MCF 10A (cell line): ENCODE measurements at regions of chr15 and their contacts with region 1.

Region 1: GRCh38 chr15:50145451-50145872 is 26.4 kb upstream of the ATP8B4 start:
- DNase-seq: peak; percentile 75
- H3K4me3 Mint-ChIP-seq: no peak overlapping the region
- H3K27ac Mint-ChIP-seq: no peak overlapping the region
- H3K4me1 Mint-ChIP-seq: peaks cover 12% of the 10 kb centered on the region
- H3K27me3 Mint-ChIP-seq: no peaks in the 10 kb centered on the region
- CTCF ChIP-seq: peak; percentile 49

Region 2: DNA sequence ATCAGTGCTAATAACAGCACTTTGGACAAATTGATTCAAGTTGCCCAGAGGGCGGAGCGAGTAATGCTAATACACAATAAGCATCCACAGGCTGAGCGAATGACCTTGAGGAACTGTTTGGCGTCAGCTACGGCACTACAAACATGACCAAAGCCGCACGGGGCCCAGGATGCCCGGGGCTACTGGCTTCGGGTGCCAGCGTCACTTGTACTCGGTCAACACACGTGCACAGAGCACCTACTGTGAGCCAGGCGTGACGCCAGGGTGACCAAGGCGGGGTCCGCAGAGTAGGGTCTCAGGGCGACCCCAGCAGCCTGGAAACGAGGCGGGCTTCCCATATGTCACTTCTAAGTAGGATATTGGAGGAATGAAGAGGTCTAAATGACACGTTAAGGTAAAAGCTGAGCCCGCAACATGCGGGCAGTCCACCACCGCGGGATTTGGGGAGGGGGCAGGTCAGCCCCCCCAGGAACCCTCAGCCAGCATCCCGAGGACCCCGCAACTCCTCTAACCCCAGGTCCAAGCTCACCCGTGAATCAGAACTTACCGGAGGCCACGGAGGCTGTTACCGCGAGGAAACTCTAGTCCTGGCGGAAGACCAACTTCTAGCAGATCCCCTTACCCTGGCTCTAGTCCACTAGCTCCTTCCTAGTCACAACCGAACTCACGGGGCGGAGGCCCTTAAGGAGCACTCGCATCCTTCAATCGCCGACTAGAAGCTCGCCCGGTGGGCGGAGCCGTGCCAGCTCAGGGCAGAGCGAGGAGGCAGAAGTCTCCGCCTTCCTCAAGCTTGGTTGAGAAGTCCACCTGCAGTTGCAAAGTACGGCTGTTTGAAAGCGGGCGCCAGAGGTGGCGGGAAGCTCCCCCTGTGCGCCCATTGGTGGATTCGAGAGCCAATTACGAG is 1334.8 kb before region 1 on chr15 and contains the start of gene CEP152:
- CTCF ChIA-PET with region 1: interaction called, 3 read pairs
- POLR2A ChIA-PET with region 1: no interaction called
- intact Hi-C with region 1: loop called (anchors 5 kb)
- DNase-seq: peak; percentile 100
- H3K4me3 Mint-ChIP-seq: peak within 1 kb of the TSS; percentile 90
- H3K27ac Mint-ChIP-seq: peak within 1 kb of the TSS; percentile 90
- H3K4me1 Mint-ChIP-seq: peaks cover 37% of the 10 kb centered on the region
- H3K27me3 Mint-ChIP-seq: no peaks in the 10 kb centered on the region
- CTCF ChIP-seq: no peak
- total RNA-seq, gene CEP152: 6.4 and 6.5 TPM in 2 replicates

Region 3: GRCh38 chr15:49235446-49236124 is 909.9 kb before region 1 on chr15:
- CTCF ChIA-PET with region 1: interaction called, 13 read pairs
- POLR2A ChIA-PET with region 1: interaction called, 4 read pairs
- intact Hi-C with region 1: loop called (anchors 2 kb)
- DNase-seq: peak; percentile 69
- H3K4me3 Mint-ChIP-seq: no peak overlapping the region
- H3K27ac Mint-ChIP-seq: peak overlapping the region; percentile 35
- H3K4me1 Mint-ChIP-seq: peaks cover 9% of the 10 kb centered on the region
- H3K27me3 Mint-ChIP-seq: no peaks in the 10 kb centered on the region
- CTCF ChIP-seq: peak; percentile 74

Region 4: DNA sequence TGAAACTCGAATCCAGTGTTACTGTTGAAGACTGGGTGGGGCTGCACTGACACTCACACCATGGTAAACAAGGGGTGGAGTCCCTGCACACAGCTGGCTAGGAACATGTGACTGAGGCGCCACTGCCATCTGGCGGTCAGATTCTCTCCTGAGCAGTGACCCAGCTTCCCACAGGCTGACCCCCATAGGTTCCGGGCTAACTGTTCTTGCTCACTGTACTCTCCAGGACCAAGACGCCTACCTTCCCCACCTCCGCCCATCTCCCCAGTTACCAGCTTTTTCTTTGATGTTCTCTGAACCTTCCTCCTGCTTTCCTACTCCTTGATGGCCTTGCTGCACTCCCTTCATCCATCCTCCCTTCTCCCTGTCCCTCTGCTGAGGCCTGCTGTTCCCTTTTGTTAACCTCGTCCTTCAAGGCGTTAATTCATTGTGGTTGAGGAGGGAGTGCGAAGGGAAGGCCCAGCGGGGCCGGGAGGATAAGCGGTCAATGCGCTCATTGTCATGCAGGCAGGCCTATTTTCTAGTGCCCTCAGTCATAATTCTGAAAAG is 141.6 kb before region 1 on chr15:
- CTCF ChIA-PET with region 1: no interaction called
- POLR2A ChIA-PET with region 1: no interaction called
- intact Hi-C with region 1: loop called (anchors 1 kb)
- DNase-seq: peak; percentile 85
- H3K4me3 Mint-ChIP-seq: no peak overlapping the region
- H3K27ac Mint-ChIP-seq: peak overlapping the region; percentile 25
- H3K4me1 Mint-ChIP-seq: no peaks in the 10 kb centered on the region
- H3K27me3 Mint-ChIP-seq: no peaks in the 10 kb centered on the region
- CTCF ChIP-seq: peak; percentile 67

Region 5: DNA sequence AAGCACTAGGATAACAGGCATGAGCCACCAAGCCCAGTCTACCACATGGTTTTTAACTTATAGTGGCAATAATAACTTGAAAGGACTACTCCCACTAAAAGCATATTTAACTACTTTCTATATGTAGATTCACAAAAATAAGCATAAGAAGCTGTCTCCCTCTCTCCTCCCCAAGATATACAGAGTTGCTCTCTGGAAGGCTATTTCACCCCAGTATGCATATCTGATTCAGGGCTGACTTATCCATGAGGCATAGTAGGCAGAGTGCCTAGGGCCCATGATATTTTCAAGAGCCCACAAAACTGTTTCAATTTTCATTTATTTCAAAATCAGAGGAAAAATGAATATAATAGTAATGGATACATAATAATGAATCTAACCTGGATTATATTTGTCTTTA is 46.9 kb before region 1 on chr15:
- CTCF ChIA-PET with region 1: no interaction called
- POLR2A ChIA-PET with region 1: no interaction called
- intact Hi-C with region 1: no loop called
- DNase-seq: no peak
- H3K4me3 Mint-ChIP-seq: no peak overlapping the region
- H3K27ac Mint-ChIP-seq: no peak overlapping the region
- H3K4me1 Mint-ChIP-seq: no peaks in the 10 kb centered on the region
- H3K27me3 Mint-ChIP-seq: no peaks in the 10 kb centered on the region
- CTCF ChIP-seq: no peak

Region 6: GRCh38 chr15:50109076-50109987 is 36.1 kb before region 1 on chr15:
- CTCF ChIA-PET with region 1: no interaction called
- POLR2A ChIA-PET with region 1: no interaction called
- intact Hi-C with region 1: no loop called
- DNase-seq: peak; percentile 21
- H3K4me3 Mint-ChIP-seq: no peak overlapping the region
- H3K27ac Mint-ChIP-seq: no peak overlapping the region
- H3K4me1 Mint-ChIP-seq: peaks cover 18% of the 10 kb centered on the region
- H3K27me3 Mint-ChIP-seq: no peaks in the 10 kb centered on the region
- CTCF ChIP-seq: no peak

Region 7: GRCh38 chr15:50128266-50128665 is 17.2 kb before region 1 on chr15:
- CTCF ChIA-PET with region 1: interaction called, 11 read pairs
- POLR2A ChIA-PET with region 1: no interaction called
- intact Hi-C with region 1: no loop called
- DNase-seq: no peak
- H3K4me3 Mint-ChIP-seq: no peak overlapping the region
- H3K27ac Mint-ChIP-seq: no peak overlapping the region
- H3K4me1 Mint-ChIP-seq: no peaks in the 10 kb centered on the region
- H3K27me3 Mint-ChIP-seq: no peaks in the 10 kb centered on the region
- CTCF ChIP-seq: no peak

Region 8: DNA sequence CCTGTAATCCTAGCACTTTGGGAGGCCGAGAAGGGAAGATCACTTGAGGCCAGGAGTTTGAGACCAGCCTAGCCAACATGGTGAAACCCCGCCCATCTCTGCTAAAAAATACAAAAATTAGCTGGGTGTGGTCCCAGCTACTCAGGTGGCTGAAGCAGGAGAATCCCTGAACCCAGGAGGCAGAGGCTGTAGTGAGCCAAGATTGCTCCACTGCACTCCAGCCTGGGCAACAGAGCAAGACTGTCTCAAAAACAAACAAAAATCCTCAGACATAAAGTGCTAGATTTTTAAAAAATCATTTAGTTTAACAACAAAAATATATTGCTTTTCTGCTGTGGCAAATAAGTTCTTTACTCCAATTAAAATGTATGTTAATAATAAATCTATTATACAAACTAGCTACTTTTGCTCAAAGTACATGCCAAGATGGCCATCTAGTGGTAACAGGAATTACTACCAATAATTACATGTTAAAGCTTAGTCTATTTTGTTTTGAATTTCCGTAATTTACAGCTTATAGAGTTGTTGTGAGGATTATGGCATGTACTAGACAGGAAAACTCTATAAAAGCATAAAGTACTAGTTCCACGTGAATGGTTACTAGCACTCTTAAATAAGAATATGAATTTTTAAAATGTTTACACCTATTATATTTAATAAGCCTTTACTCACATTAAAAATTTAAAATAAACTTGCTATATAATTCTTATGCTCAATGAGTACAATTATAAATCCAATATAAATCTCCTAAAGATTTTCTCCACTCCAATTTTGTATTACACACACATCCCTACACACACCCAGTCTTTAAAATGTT is 170.6 kb after region 1 on chr15:
- CTCF ChIA-PET with region 1: interaction called, 136 read pairs
- POLR2A ChIA-PET with region 1: interaction called, 14 read pairs
- intact Hi-C with region 1: loop called (anchors 1 kb)
- DNase-seq: peak; percentile 58
- H3K4me3 Mint-ChIP-seq: no peak overlapping the region
- H3K27ac Mint-ChIP-seq: no peak overlapping the region
- H3K4me1 Mint-ChIP-seq: no peaks in the 10 kb centered on the region
- H3K27me3 Mint-ChIP-seq: no peaks in the 10 kb centered on the region
- CTCF ChIP-seq: peak; percentile 59